ENCODE measurements at regions of chr1 and their contacts with region 1.

Region 1: DNA sequence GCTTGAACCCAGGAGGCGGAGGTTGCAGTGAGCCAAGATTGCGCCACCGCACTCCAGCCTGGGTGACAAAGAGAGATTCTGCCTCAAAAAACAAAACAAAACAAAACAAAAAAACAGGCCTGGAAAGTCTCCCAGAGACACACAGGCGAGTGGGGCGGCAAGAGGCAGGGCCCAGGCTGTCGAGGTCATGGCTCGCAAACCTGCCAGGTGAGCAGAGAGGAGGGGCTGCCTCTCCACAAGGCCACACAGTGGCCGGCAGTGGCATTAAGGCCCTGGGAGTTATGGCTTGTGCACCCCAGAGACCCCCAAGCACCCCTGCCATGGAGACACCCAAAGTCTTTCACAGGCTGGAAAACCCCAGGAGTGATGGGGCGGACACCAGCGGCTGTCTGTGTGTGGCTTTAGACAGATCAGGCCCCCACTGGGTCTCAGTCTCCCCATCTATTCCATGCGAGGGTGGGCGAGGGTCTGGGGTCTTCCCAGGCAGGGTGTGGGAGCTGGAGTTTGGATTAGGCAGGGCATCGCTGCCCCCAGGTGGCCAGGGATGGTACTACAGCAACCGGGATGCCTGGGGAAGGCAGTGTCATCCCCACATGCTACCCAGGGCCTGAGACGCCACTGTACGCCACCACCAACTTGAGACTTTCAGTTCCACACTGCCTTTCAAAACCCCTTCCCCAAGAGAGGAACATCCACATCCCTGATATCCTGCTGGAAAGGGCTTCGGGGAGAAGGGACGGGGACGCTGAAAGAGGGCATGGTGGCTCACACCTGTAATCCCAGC is 7.3 kb upstream of the CTRC start:
- DNase-seq: peak; percentile 36
- ATAC-seq: peak; percentile 75
- H3K4me3 ChIP-seq: no peak overlapping the region
- H3K27ac ChIP-seq: no peak overlapping the region
- H3K4me1 ChIP-seq: peaks cover 29% of the 10 kb centered on the region
- H3K27me3 ChIP-seq: no peaks in the 10 kb centered on the region
- CTCF ChIP-seq: peak; percentile 90
- POLR2A ChIP-seq: 0 out of 2 replicates have a peak, but pooled peaks have one; percentile 35
- RAD21 ChIP-seq: peak; percentile 92

Region 2: GRCh38 chr1:15152318-15153183 is 278.4 kb before region 1 on chr1:
- CTCF ChIA-PET with region 1: no interaction called
- POLR2A ChIA-PET with region 1: no interaction called
- dilution Hi-C with region 1: no loop called
- in situ Hi-C with region 1: loop called (anchors 10 kb)
- intact Hi-C with region 1: loop called (anchors 2 kb)
- DNase-seq: peak; percentile 91
- ATAC-seq: peak; percentile 56
- H3K4me3 ChIP-seq: peak overlapping the region; percentile 80
- H3K27ac ChIP-seq: peak overlapping the region; percentile 64
- H3K4me1 ChIP-seq: peaks cover 19% of the 10 kb centered on the region
- H3K27me3 ChIP-seq: 0 out of 2 replicates have a peak, but pooled peaks cover 3% of the 10 kb centered on the region
- CTCF ChIP-seq: peak; percentile 85
- POLR2A ChIP-seq: peak; percentile 36; the same call in 1 of the 2 replicates
- RAD21 ChIP-seq: peak; percentile 83

Region 3: GRCh38 chr1:15272009-15272788 is 158.8 kb before region 1 on chr1:
- CTCF ChIA-PET with region 1: no interaction called
- POLR2A ChIA-PET with region 1: no interaction called
- dilution Hi-C with region 1: no loop called
- in situ Hi-C with region 1: no loop called
- intact Hi-C with region 1: loop called (anchors 2 kb)
- DNase-seq: peak; percentile 73
- ATAC-seq: peak; percentile 100
- H3K4me3 ChIP-seq: no peak overlapping the region
- H3K27ac ChIP-seq: no peak overlapping the region
- H3K4me1 ChIP-seq: peaks cover 2% of the 10 kb centered on the region; the same call in 1 of the 2 replicates
- H3K27me3 ChIP-seq: peaks cover 7% of the 10 kb centered on the region
- CTCF ChIP-seq: peak; percentile 96
- POLR2A ChIP-seq: no peak
- RAD21 ChIP-seq: peak; percentile 96

Region 4: GRCh38 chr1:15323351-15323988 is 107.5 kb before region 1 on chr1:
- CTCF ChIA-PET with region 1: interaction called, 25 read pairs
- POLR2A ChIA-PET with region 1: no interaction called
- dilution Hi-C with region 1: no loop called
- in situ Hi-C with region 1: loop called (anchors 5 kb)
- intact Hi-C with region 1: loop called (anchors 1 kb)
- DNase-seq: peak; percentile 80
- ATAC-seq: peak; percentile 98
- H3K4me3 ChIP-seq: no peak overlapping the region
- H3K27ac ChIP-seq: no peak overlapping the region
- H3K4me1 ChIP-seq: no peaks in the 10 kb centered on the region; the same call in 1 of the 2 replicates
- H3K27me3 ChIP-seq: no peaks in the 10 kb centered on the region
- CTCF ChIP-seq: peak; percentile 93
- POLR2A ChIP-seq: no peak
- RAD21 ChIP-seq: peak; percentile 93

Region 5: GRCh38 chr1:15328351-15329103 is 102.5 kb before region 1 on chr1:
- CTCF ChIA-PET with region 1: interaction called, 25 read pairs
- POLR2A ChIA-PET with region 1: no interaction called
- dilution Hi-C with region 1: no loop called
- in situ Hi-C with region 1: loop called (anchors 5 kb)
- intact Hi-C with region 1: loop called (anchors 1 kb)
- DNase-seq: peak; percentile 64
- ATAC-seq: no peak
- H3K4me3 ChIP-seq: no peak overlapping the region
- H3K27ac ChIP-seq: no peak overlapping the region
- H3K4me1 ChIP-seq: peaks cover 8% of the 10 kb centered on the region
- H3K27me3 ChIP-seq: no peaks in the 10 kb centered on the region
- CTCF ChIP-seq: no peak
- POLR2A ChIP-seq: no peak
- RAD21 ChIP-seq: no peak

Region 6: DNA sequence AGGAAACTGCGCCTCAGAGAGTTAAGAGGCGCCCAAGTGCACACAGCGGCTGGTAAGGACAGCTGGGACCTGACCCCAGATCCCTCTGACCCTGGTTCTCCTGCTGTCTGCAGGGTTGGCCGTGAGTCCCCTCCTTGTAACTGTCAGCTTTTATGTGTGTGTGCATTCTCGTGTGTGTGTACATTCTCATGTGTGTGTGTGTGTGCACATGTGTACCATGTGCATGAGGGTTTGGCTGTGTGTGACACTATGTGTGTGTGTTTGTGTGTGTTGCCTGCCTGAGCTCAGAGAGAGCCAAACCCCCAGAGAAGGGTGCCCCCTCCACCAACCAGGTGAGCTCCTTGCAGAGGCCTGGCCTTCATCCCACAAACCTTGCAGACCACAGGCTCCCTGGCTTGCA is 47.2 kb before region 1 on chr1:
- CTCF ChIA-PET with region 1: no interaction called
- POLR2A ChIA-PET with region 1: interaction called, 10 read pairs
- dilution Hi-C with region 1: no loop called
- in situ Hi-C with region 1: no loop called
- intact Hi-C with region 1: no loop called
- DNase-seq: no peak
- ATAC-seq: no peak
- H3K4me3 ChIP-seq: no peak overlapping the region
- H3K27ac ChIP-seq: no peak overlapping the region
- H3K4me1 ChIP-seq: no peaks in the 10 kb centered on the region; the same call in 1 of the 2 replicates
- H3K27me3 ChIP-seq: peaks cover 11% of the 10 kb centered on the region
- CTCF ChIP-seq: no peak
- POLR2A ChIP-seq: no peak
- RAD21 ChIP-seq: no peak

Region 7: GRCh38 chr1:15409388-15410222 is 21.4 kb before region 1 on chr1 and contains the start of gene EFHD2:
- CTCF ChIA-PET with region 1: interaction called, 3 read pairs
- POLR2A ChIA-PET with region 1: no interaction called
- dilution Hi-C with region 1: no loop called
- in situ Hi-C with region 1: no loop called
- intact Hi-C with region 1: loop called (anchors 2 kb)
- DNase-seq: peak; percentile 71
- ATAC-seq: peak; percentile 93
- H3K4me3 ChIP-seq: peak within 1 kb of the TSS; percentile 99
- H3K27ac ChIP-seq: peak within 1 kb of the TSS; percentile 54
- H3K4me1 ChIP-seq: peaks cover 25% of the 10 kb centered on the region
- H3K27me3 ChIP-seq: no peaks in the 10 kb centered on the region
- CTCF ChIP-seq: peak; percentile 5; the same call in 1 of the 2 replicates
- POLR2A ChIP-seq: peak; percentile 84
- RAD21 ChIP-seq: no peak
- total RNA-seq, gene EFHD2: 22.6 and 23.1 TPM in 2 replicates

Region 8: GRCh38 chr1:15454256-15454655 is 23.3 kb after region 1 on chr1:
- CTCF ChIA-PET with region 1: no interaction called
- POLR2A ChIA-PET with region 1: no interaction called
- dilution Hi-C with region 1: no loop called
- in situ Hi-C with region 1: no loop called
- intact Hi-C with region 1: no loop called
- DNase-seq: peak; percentile 87
- ATAC-seq: peak; percentile 79
- H3K4me3 ChIP-seq: no peak overlapping the region
- H3K27ac ChIP-seq: no peak overlapping the region
- H3K4me1 ChIP-seq: 0 out of 2 replicates have a peak, but pooled peaks cover 4% of the 10 kb centered on the region
- H3K27me3 ChIP-seq: no peaks in the 10 kb centered on the region
- CTCF ChIP-seq: no peak
- POLR2A ChIP-seq: no peak
- RAD21 ChIP-seq: no peak

Region 9: GRCh38 chr1:15543589-15544568 is 112.9 kb after region 1 on chr1:
- CTCF ChIA-PET with region 1: no interaction called
- POLR2A ChIA-PET with region 1: no interaction called
- dilution Hi-C with region 1: no loop called
- in situ Hi-C with region 1: no loop called
- intact Hi-C with region 1: no loop called
- DNase-seq: peak; percentile 67
- ATAC-seq: peak; percentile 91
- H3K4me3 ChIP-seq: no peak overlapping the region
- H3K27ac ChIP-seq: no peak overlapping the region; the same call in 1 of the 2 replicates
- H3K4me1 ChIP-seq: peaks cover 6% of the 10 kb centered on the region
- H3K27me3 ChIP-seq: no peaks in the 10 kb centered on the region
- CTCF ChIP-seq: no peak
- POLR2A ChIP-seq: no peak
- RAD21 ChIP-seq: no peak